BJ (cell line): ENCODE measurements at regions of chr1 and their contacts with region 1.

Region 1: GRCh38 chr1:27044613-27045151 is 32.0 kb upstream of the TENT5B start:
- DNase-seq: no peak
- H3K4me3 ChIP-seq: no peak overlapping the region
- H3K27me3 ChIP-seq: no peaks in the 10 kb centered on the region
- CTCF ChIP-seq: peak; percentile 97

Region 2: GRCh38 chr1:26788836-26789611 is 255.7 kb before region 1 on chr1:
- CTCF ChIA-PET with region 1: no interaction called
- POLR2A ChIA-PET with region 1: no interaction called
- DNase-seq: no peak
- H3K4me3 ChIP-seq: peak overlapping the region; percentile 54
- H3K27me3 ChIP-seq: no peaks in the 10 kb centered on the region
- CTCF ChIP-seq: peak; percentile 93

Region 3: GRCh38 chr1:26921540-26922430 is 122.9 kb before region 1 on chr1 and contains the start of gene NUDC:
- CTCF ChIA-PET with region 1: no interaction called
- POLR2A ChIA-PET with region 1: no interaction called
- DNase-seq: peak; percentile 89
- H3K4me3 ChIP-seq: peak within 1 kb of the TSS; percentile 100
- H3K27me3 ChIP-seq: no peaks in the 10 kb centered on the region
- CTCF ChIP-seq: no peak
- polyA plus RNA-seq, gene NUDC: 40.7 and 43.7 TPM in 2 replicates

Region 4: DNA sequence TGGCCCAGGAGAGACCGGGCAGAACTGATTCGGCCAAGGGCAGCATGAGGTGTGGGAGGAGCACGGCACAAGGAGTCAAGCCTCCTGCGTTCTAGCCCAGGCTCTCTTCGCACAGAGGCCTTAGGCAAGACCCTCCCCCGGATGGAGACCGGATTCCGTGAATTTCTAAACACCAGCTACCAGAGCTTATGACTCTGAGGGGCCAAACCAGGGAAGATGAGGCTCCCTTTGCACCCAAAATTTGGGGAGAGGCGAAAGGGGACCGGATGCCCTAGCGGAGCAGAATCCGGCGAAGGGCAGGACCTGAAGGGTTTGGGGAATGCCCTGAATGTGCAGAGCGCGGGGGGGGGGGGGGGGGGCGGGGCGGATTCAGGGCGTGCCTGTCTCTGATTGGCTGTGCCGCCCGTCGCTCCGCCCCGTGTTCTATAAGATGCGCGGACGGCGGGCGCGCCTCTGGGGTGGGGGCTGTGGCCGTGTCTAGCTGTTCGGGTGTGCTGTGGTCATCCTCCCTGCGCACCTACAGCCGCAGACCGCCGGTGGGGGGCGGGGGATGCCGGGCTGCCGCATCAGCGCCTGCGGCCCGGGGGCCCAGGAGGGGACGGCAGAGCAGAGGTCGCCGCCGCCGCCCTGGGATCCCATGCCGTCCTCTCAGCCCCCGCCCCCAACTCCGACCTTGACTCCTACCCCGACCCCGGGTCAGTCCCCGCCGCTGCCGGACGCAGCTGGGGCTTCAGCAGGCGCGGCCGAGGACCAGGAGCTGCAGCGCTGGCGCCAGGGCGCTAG is 51.3 kb before region 1 on chr1 and contains the start of gene TRNP1:
- CTCF ChIA-PET with region 1: interaction called, 74 read pairs
- POLR2A ChIA-PET with region 1: no interaction called
- DNase-seq: no peak
- H3K4me3 ChIP-seq: peak within 1 kb of the TSS; percentile 70
- H3K27me3 ChIP-seq: no peaks in the 10 kb centered on the region
- CTCF ChIP-seq: no peak
- polyA plus RNA-seq, gene TRNP1: 68.9 and 75.4 TPM in 2 replicates

Region 5: DNA sequence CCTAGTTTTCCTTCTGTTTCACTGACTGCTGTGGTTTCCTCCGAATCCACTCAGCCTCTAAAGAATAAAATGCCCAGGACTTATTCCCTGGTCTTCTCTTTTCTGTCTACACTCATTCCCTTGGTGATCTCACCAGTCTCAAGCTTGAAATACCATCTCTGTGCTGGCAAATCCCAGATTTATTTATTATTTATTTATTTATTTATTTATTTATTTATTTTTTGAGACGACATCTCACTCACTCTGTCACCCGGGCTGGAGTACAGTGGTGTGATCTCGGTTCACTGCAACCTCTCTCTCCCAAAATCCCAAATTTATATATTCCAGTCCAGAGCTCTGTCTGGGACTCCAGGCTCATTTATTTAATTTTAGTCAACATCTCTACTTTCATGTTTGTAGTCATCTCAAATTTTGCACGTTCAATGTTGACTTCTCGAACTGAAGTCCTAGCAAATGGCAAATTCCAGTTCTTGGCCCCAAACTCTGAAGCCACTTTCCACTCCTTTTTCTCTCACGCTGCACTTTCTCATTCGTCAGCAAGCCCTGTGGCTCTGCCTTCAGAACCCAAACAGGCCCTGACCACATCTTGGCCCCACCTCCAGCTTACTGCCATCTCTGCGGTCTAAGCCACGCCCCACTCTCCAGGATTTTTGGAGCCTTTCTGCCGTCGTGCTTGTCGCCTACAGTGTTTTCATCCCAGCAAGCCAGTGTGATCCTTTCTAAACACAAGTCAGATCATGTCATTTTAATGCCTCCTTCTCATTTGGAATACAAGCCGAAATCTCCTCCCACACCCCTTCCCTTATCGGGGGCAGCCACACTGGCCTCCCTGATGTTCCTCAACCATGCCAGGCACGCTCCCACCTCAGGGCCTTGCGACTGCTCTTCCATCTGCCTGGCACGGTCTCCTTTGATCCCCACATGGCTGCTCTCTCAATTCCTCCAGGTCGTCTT is 17.8 kb before region 1 on chr1:
- CTCF ChIA-PET with region 1: interaction called, 14 read pairs
- POLR2A ChIA-PET with region 1: no interaction called
- DNase-seq: peak; percentile 44
- H3K4me3 ChIP-seq: no peak overlapping the region
- H3K27me3 ChIP-seq: no peaks in the 10 kb centered on the region
- CTCF ChIP-seq: no peak

Region 6: DNA sequence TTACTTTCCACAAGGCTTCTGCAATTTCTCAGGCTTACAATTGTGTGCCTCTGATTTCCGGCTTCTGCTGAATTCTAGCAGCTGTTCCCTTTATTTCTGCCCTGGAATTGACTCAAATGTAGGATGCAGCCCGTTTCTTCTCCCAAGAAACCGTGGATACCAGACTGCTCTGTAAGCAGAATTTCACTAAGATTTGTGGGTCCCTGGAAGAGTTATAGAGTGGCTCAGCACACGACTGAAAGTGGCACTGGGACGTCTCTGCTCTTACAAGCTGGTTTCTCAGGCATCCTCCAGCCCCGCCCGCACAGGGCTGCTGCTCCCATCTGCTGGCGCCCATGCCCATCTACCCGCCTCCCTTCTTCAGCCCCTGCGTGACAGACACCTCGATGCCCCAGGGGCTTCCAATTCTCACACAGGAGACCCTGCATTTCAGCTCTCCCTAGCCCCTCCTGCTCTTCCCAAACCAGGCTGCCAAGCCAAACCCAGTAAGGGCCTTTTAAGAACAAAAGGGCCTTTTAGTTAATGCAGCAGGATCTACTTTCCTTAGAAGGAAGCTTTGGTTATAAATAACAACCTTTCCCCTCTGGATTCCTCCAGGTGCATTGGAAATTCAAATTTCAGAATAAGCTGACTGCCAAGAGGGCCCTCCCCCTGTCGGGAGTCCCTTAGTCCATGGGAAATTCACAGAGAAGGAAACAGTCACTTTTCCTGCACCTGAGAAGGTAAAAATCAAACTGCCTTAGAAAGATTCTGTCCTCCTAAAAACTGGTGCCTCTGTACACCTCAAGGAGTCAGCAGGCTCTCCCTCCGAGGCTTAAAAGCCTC is 13.3 kb after region 1 on chr1:
- CTCF ChIA-PET with region 1: interaction called, 89 read pairs
- POLR2A ChIA-PET with region 1: no interaction called
- DNase-seq: no peak
- H3K4me3 ChIP-seq: no peak overlapping the region
- H3K27me3 ChIP-seq: peaks cover 6% of the 10 kb centered on the region; the same call in 1 of the 2 replicates
- CTCF ChIP-seq: no peak

Region 7: GRCh38 chr1:27077968-27078367 is 33.3 kb after region 1 on chr1:
- CTCF ChIA-PET with region 1: interaction called, 36 read pairs
- POLR2A ChIA-PET with region 1: no interaction called
- DNase-seq: no peak
- H3K4me3 ChIP-seq: no peak overlapping the region
- H3K27me3 ChIP-seq: no peaks in the 10 kb centered on the region
- CTCF ChIP-seq: no peak

Region 8: GRCh38 chr1:27284425-27285273 is 240.0 kb after region 1 on chr1:
- CTCF ChIA-PET with region 1: interaction called, 13 read pairs
- POLR2A ChIA-PET with region 1: no interaction called
- DNase-seq: no peak
- H3K4me3 ChIP-seq: no peak overlapping the region
- H3K27me3 ChIP-seq: no peaks in the 10 kb centered on the region
- CTCF ChIP-seq: peak; percentile 79